Left ventricle myocardium inferior (tissue), 1 donor: ENCODE measurements at regions of chrX and their contacts with region 1.

Region 1: DNA sequence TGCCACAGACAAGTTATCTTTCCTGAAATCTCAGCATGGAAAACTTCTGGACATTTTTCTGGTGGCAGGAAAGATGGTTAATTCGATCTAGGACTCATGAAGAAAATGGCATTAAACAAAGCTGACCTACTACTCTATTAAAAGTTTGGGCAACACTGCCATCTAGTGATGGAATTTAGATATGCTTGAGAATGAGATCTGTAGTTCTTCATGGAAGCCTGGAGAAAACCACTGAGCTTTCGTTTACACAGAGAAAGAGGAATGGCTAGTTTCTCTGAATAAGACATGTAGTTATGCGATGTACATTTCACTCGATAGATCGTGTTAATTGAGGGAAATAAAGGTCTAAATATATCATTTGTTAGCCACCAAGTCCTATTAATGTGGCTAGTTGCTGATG is 51.7 kb upstream of the CHRDL1 start:
- DNase-seq: no peak
- H3K4me3 ChIP-seq: no peak overlapping the region
- H3K27ac ChIP-seq: no peak overlapping the region
- H3K4me1 ChIP-seq: no peaks in the 10 kb centered on the region
- H3K27me3 ChIP-seq: no peaks in the 10 kb centered on the region
- CTCF ChIP-seq: peak; percentile 63

Region 2: GRCh38 chrX:110450050-110450449 is 397.3 kb before region 1 on chrX:
- intact Hi-C with region 1: loop called (anchors 5 kb)
- DNase-seq: peak; percentile 49
- H3K4me3 ChIP-seq: no peak overlapping the region
- H3K27ac ChIP-seq: no peak overlapping the region
- H3K4me1 ChIP-seq: no peaks in the 10 kb centered on the region
- H3K27me3 ChIP-seq: no peaks in the 10 kb centered on the region
- CTCF ChIP-seq: peak; percentile 70

Region 3: DNA sequence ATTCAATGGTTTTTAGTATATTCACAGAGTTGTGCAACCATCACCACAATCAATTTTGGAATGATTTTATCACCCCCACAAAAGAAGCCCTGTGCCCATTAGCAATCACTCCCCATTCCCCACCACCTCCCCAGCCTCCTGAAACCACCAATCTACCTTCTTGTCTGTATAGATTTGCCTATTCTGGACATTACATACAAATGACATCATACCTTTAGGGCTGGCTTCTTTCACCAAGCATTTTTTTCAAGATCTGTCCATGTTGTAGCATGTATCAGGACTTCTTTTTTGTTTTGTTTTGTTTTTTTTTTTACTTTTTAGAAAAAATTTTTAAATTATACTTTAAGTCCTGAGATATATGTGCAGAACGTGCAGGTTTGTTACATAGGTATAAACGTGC is 380.5 kb before region 1 on chrX:
- intact Hi-C with region 1: loop called (anchors 5 kb)
- DNase-seq: no peak
- H3K4me3 ChIP-seq: no peak overlapping the region
- H3K27ac ChIP-seq: no peak overlapping the region
- H3K4me1 ChIP-seq: no peaks in the 10 kb centered on the region
- H3K27me3 ChIP-seq: no peaks in the 10 kb centered on the region
- CTCF ChIP-seq: no peak

Region 4: GRCh38 chrX:110732266-110732665 is 115.1 kb before region 1 on chrX:
- intact Hi-C with region 1: no loop called
- DNase-seq: peak; percentile 15
- H3K4me3 ChIP-seq: no peak overlapping the region
- H3K27ac ChIP-seq: no peak overlapping the region
- H3K4me1 ChIP-seq: no peaks in the 10 kb centered on the region
- H3K27me3 ChIP-seq: no peaks in the 10 kb centered on the region
- CTCF ChIP-seq: no peak